ENCODE measurements at regions of chr11 and their contacts with region 1.

Region 1: GRCh38 chr11:103529181-103529684 is 420.0 kb downstream of the DYNC2H1 start:
- DNase-seq: no peak
- H3K4me3 ChIP-seq: no peak overlapping the region
- CTCF ChIP-seq: no peak

Region 2: GRCh38 chr11:103013421-103013820 is 515.8 kb before region 1 on chr11:
- in situ Hi-C with region 1: no loop called
- DNase-seq: no peak
- H3K4me3 ChIP-seq: no peak overlapping the region
- CTCF ChIP-seq: no peak

Region 3: GRCh38 chr11:103581760-103582159 is 52.5 kb after region 1 on chr11:
- in situ Hi-C with region 1: loop called (anchors 5 kb)
- DNase-seq: peak; percentile 85
- H3K4me3 ChIP-seq: no peak overlapping the region
- CTCF ChIP-seq: no peak